OCI-LY7 (cell line): ENCODE measurements at regions of chr3 and their contacts with region 1.

Region 1: GRCh38 chr3:151227807-151228665 is 25.0 kb upstream of the GPR171 start:
- DNase-seq: peak; percentile 77
- H3K4me3 ChIP-seq: no peak overlapping the region
- H3K27ac ChIP-seq: no peak overlapping the region
- H3K4me1 ChIP-seq: peaks cover 12% of the 10 kb centered on the region
- CTCF ChIP-seq: peak; percentile 98

Region 2: GRCh38 chr3:151168269-151169094 is 59.6 kb before region 1 on chr3:
- CTCF ChIA-PET with region 1: no interaction called
- POLR2A ChIA-PET with region 1: no interaction called
- intact Hi-C with region 1: loop called (anchors 2 kb)
- DNase-seq: peak; percentile 68
- H3K4me3 ChIP-seq: no peak overlapping the region
- H3K27ac ChIP-seq: no peak overlapping the region
- H3K4me1 ChIP-seq: peaks cover 25% of the 10 kb centered on the region
- CTCF ChIP-seq: peak; percentile 92

Region 3: DNA sequence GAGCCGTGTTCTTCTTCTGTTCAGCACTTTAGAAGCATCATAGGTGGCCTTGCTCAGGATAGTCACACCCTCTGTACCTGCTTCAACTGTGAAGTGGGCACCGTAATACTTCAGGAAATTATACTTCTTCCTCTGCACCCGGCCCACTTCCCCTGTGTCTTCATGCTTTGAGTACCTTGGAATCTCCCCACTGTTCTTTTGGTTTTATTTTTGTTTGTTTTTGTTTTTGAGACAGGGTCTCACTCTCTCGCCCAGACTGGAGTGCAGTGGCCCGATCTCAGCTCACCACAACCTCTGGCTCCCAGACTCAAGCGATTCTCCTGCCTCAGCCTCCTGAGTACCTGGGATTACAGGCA is 48.6 kb after region 1 on chr3:
- CTCF ChIA-PET with region 1: interaction called, 6 read pairs
- POLR2A ChIA-PET with region 1: interaction called, 6 read pairs
- intact Hi-C with region 1: loop called (anchors 2 kb)
- DNase-seq: peak; percentile 8
- H3K4me3 ChIP-seq: no peak overlapping the region
- H3K27ac ChIP-seq: no peak overlapping the region
- H3K4me1 ChIP-seq: peaks cover 42% of the 10 kb centered on the region
- CTCF ChIP-seq: no peak

Region 4: DNA sequence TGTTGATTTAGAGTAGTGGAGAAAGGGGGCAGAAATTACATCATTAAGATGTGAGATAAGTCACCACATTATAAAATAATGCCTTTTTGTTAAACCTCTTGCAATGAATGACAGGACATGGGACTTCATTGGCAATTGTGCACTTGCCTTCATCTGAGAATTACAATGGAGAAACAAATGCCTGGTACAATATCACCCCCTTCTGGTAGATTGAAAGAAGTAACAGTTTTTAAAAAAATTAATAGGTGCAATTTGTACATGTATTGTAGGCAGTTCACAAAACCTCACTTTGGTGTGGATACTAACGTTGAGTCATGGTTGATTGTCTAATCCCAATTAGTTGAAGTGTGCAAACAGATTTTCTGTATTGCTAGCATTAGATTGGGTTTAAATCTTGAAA is 54.9 kb after region 1 on chr3:
- CTCF ChIA-PET with region 1: interaction called, 6 read pairs
- POLR2A ChIA-PET with region 1: interaction called, 6 read pairs
- intact Hi-C with region 1: loop called (anchors 1 kb)
- DNase-seq: peak; percentile 60
- H3K4me3 ChIP-seq: no peak overlapping the region
- H3K27ac ChIP-seq: no peak overlapping the region
- H3K4me1 ChIP-seq: peaks cover 9% of the 10 kb centered on the region
- CTCF ChIP-seq: peak; percentile 88

Region 5: DNA sequence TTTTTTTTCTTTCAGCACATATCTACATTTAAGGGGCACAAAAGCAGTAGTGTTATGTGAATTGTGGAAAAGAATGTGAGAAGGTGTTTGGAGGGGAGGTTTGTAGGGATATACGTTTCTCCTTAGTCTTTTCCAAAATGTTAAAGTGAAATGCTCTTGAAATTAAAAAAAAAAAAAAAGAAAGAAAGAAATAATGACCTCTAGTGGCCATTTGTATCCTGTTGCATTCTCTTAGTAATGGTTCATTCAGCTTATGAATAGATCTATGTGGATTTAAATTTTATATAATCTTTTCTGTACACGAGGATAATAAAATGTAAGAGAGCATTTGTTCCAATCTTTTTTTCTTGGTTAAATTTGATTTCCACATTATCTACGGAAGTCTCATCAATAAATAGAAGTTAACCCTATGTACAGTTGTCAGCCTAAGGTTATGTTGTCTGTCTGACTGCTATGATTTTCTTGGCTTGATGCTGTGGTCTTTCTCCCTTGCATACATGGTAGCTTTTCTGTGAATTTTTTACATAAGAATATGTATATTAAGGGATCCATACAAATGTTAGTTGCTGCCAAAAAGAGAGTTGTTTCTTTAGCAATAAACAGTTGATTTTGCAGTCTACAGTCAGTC is 99.6 kb after region 1 on chr3:
- CTCF ChIA-PET with region 1: no interaction called
- POLR2A ChIA-PET with region 1: no interaction called
- intact Hi-C with region 1: loop called (anchors 5 kb)
- DNase-seq: peak; percentile 35
- H3K4me3 ChIP-seq: no peak overlapping the region
- H3K27ac ChIP-seq: no peak overlapping the region
- H3K4me1 ChIP-seq: no peaks in the 10 kb centered on the region
- CTCF ChIP-seq: peak; percentile 89

Region 6: GRCh38 chr3:151468284-151468917 is 240.4 kb after region 1 on chr3:
- CTCF ChIA-PET with region 1: no interaction called
- POLR2A ChIA-PET with region 1: no interaction called
- intact Hi-C with region 1: no loop called
- DNase-seq: peak; percentile 60
- H3K4me3 ChIP-seq: no peak overlapping the region
- H3K27ac ChIP-seq: no peak overlapping the region
- H3K4me1 ChIP-seq: no peaks in the 10 kb centered on the region
- CTCF ChIP-seq: peak; percentile 97

Region 7: GRCh38 chr3:151838583-151839312 is 610.7 kb after region 1 on chr3:
- CTCF ChIA-PET with region 1: no interaction called
- POLR2A ChIA-PET with region 1: no interaction called
- intact Hi-C with region 1: loop called (anchors 10 kb)
- DNase-seq: peak; percentile 65
- H3K4me3 ChIP-seq: no peak overlapping the region
- H3K27ac ChIP-seq: no peak overlapping the region
- H3K4me1 ChIP-seq: no peaks in the 10 kb centered on the region
- CTCF ChIP-seq: peak; percentile 95